PC-3 (cell line): ENCODE measurements at regions of chr4 and their contacts with region 1.

Region 1: DNA sequence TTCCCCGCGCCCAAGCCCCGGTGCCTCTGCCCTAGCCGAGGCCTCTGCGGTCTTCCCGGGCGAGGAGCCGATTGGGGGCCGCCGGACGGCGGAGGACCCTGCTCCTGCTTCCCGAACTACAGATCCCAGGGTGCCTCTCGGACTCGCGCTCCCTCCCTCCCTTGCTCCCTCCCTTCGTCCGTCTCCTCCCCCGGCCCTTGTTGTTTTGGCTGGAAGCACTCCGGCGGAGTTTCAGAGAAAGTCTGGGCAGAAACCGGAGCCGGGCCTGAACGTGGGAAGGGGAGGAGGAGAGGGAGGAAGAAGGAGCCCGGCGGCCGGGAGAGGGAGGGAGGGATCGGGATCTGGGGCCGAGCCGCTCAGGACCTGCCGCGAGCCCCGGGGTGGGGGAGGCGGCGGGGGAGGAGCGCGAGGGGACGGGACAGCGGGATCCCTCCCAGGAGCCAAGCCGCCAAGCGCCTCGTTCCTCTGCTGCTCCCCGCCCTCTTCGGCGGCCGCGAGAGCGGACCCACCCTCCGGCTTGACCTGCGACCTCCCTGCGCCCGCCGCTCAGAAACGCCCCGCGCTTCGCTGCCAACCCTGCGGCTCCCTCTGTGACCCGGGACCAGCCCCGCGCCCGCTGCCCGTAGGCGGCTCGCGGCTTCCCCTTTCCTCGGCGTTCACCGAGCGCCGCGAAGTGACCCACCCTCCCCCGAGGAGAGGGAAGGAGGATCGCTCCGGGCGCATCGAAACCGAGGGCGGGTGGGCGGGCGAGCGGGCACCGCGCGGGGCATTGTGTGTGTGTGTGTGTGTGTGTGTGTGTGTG is 496 bp upstream of the GAB1 start:
- DNase-seq: peak; percentile 74
- ATAC-seq: peak; percentile 74
- H3K4me3 ChIP-seq: peak overlapping the region; percentile 73
- H3K27ac ChIP-seq: peak overlapping the region; percentile 50
- H3K4me1 ChIP-seq: peaks cover 14% of the 10 kb centered on the region
- H3K27me3 ChIP-seq: no peaks in the 10 kb centered on the region
- CTCF ChIP-seq: no peak

Region 2: DNA sequence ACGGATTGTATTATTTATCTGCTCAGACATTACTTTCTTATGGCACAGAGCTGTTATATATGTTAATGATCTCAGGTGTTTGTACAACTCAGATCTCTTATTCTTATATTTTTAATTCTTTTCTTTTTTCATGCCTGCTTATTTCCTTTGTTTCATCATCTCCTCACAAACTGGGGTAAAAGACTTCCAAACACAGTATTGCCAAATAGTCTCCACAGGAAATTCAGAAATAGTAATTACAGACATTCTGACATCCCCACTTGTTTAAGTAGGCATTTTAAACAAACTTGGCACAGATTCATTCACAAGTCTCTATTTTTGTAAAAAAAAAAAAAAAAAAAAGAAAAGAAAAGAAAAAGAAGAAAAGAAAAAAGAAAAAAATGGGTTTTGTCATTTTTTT is 281.2 kb before region 1 on chr4:
- CTCF ChIA-PET with region 1: no interaction called
- POLR2A ChIA-PET with region 1: no interaction called
- intact Hi-C with region 1: no loop called
- DNase-seq: no peak
- ATAC-seq: no peak
- H3K4me3 ChIP-seq: no peak overlapping the region
- H3K27ac ChIP-seq: no peak overlapping the region
- H3K4me1 ChIP-seq: no peaks in the 10 kb centered on the region
- H3K27me3 ChIP-seq: peaks cover 9% of the 10 kb centered on the region
- CTCF ChIP-seq: no peak

Region 3: DNA sequence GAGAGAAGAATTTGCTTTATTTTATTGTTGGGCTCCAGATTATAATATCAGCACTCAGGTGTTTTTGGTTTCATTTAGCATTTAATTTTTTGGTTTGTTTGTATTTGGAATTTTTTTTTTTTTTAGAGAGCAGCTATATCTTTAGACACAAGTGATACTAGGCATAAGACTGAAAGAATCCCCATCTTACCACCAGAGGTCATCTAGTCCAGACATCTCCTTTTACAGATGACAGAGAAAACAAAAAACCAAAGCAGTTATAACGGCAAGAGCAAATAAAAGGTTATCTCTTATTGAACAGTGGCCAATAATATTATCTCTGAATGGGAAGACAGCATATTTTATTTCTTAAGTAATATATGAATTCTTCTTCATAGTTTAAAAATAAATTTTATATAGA is 128.6 kb before region 1 on chr4:
- CTCF ChIA-PET with region 1: interaction called, 3 read pairs
- POLR2A ChIA-PET with region 1: no interaction called
- intact Hi-C with region 1: loop called (anchors 2 kb)
- DNase-seq: peak; percentile 44
- ATAC-seq: no peak
- H3K4me3 ChIP-seq: no peak overlapping the region
- H3K27ac ChIP-seq: no peak overlapping the region
- H3K4me1 ChIP-seq: no peaks in the 10 kb centered on the region
- H3K27me3 ChIP-seq: no peaks in the 10 kb centered on the region
- CTCF ChIP-seq: peak; percentile 56

Region 4: DNA sequence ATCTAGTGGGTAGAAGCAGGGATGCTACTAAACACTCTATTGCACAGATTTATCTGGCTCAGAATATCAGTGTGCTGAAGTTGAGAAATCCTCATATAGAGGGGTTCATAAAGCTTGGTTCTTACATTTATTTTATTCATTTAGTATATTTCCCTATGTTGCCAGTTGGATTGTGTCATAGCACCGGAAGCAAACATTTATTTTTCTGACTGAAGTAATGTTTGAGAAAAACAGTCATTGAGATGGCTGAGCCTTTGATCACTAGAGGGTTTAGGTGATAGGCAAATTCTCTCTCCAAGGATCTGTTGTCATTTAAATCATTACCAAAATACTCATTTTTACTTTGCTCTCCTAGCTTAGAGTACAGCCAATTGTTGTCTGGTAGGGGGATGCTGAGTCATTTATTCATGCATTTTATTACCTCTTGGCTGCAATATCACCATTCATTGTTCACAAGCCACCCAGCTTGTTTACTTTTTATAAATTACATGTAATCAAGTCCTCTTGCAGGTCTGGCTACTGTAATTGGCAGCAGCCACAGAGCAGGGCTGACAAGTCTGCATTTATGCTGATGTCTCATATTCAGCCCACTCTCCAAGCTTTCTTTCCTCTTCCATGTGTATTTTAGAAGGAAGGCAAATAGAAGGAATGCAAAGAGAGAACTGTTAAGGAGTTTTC is 15.7 kb after region 1 on chr4:
- CTCF ChIA-PET with region 1: interaction called, 3 read pairs
- POLR2A ChIA-PET with region 1: interaction called, 3 read pairs
- intact Hi-C with region 1: loop called (anchors 1 kb)
- DNase-seq: peak; percentile 86
- ATAC-seq: peak; percentile 93
- H3K4me3 ChIP-seq: peak overlapping the region; percentile 15; the same call in 1 of the 2 replicates
- H3K27ac ChIP-seq: peak overlapping the region; percentile 55
- H3K4me1 ChIP-seq: peaks cover 40% of the 10 kb centered on the region
- H3K27me3 ChIP-seq: no peaks in the 10 kb centered on the region
- CTCF ChIP-seq: no peak

Region 5: DNA sequence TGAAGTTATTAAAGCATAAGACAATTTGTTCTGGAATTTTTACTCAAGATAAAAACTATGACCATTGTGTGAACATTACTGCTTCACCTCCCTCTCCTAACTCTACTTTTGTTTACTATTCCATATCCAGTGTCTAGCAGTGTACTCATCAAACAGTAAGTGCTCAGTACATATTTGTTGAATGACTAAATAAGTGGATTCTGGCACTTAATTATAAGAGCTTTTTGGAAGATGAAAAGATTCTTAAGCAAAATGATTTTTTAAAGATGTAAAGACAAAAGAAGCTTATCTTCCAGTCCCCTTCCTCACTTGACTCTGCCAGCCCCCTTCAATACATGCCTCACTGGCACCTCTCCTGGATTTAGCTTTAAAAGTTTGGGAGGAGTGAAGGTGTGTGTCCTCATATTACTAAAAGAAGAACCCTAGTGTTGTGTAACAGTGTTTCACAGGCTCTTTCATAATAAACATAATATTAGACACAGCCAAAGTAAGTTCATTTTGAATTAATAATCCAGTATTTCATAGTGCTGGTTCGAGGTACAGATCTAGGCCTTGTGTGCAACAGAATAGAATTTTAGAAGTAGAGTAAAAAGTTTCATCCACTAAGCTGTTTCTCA is 53.5 kb after region 1 on chr4:
- CTCF ChIA-PET with region 1: no interaction called
- POLR2A ChIA-PET with region 1: no interaction called
- intact Hi-C with region 1: loop called (anchors 2 kb)
- DNase-seq: peak; percentile 79
- ATAC-seq: peak; percentile 98
- H3K4me3 ChIP-seq: no peak overlapping the region
- H3K27ac ChIP-seq: peak overlapping the region; percentile 49
- H3K4me1 ChIP-seq: peaks cover 18% of the 10 kb centered on the region
- H3K27me3 ChIP-seq: no peaks in the 10 kb centered on the region
- CTCF ChIP-seq: no peak

Region 6: DNA sequence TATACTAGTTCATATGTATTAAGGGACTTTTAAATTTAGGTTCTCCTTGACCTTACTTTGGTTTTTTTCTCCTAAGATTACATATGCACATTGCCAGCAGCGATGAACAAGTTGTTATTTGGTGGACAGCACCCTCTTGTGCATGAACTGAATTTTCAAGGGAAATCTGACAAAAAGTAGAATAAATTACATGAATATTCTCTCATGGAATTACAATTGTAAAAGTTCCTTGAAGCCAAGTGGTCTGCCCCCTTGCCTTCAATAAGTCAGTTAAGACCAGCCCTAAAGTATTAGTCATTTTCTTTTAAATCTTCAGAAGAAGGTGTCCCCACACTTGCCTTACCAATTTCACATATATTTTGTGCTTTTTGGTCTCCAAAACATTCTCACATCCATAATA is 146.7 kb after region 1 on chr4:
- CTCF ChIA-PET with region 1: no interaction called
- POLR2A ChIA-PET with region 1: no interaction called
- intact Hi-C with region 1: loop called (anchors 2 kb)
- DNase-seq: peak; percentile 74
- ATAC-seq: peak; percentile 49
- H3K4me3 ChIP-seq: no peak overlapping the region
- H3K27ac ChIP-seq: no peak overlapping the region
- H3K4me1 ChIP-seq: no peaks in the 10 kb centered on the region
- H3K27me3 ChIP-seq: no peaks in the 10 kb centered on the region
- CTCF ChIP-seq: peak; percentile 86